Right ventricle myocardium inferior (tissue), 1 donor: ENCODE measurements at regions of chr9 and their contacts with region 1.

Region 1: GRCh38 chr9:4740638-4741364 is at the start of gene AK3:
- DNase-seq: peak; percentile 94
- ATAC-seq: peak; percentile 97
- total RNA-seq, gene AK3: 198 TPM

Region 2: GRCh38 chr9:3467593-3468219 is 1273.1 kb before region 1 on chr9:
- intact Hi-C with region 1: no loop called
- DNase-seq: peak; percentile 73
- ATAC-seq: peak; percentile 92

Region 3: DNA sequence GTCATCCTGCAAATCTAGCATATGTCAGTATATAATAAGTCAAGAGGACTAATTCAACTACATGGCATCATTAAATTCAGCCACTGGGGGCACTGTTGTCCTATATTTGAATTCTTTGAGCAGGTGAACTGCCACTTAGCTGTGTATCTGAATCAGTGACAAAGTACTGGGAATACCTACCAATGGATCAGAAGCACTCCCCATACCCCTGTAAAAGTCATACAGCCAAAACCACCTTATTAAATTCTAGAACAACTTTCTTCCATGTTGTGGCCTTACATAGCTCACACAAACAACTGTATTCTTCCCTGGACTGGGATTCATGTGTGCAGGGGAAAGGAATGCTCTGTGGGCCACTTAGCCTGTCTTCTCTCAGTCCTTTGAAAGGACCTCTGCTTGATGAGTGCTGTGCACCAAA is 136.1 kb before region 1 on chr9:
- intact Hi-C with region 1: loop called (anchors 5 kb)
- DNase-seq: no peak
- ATAC-seq: peak; percentile 64

Region 4: GRCh38 chr9:4662108-4662988 is 78.5 kb before region 1 on chr9 and contains the start of gene PLPP6:
- intact Hi-C with region 1: loop called (anchors 2 kb)
- DNase-seq: peak; percentile 93
- ATAC-seq: peak; percentile 97
- total RNA-seq, gene PLPP6: 2.3 TPM

Region 5: GRCh38 chr9:4679268-4680172 is 61.3 kb before region 1 on chr9 and contains the start of gene CDC37L1:
- intact Hi-C with region 1: loop called (anchors 5 kb)
- DNase-seq: peak; percentile 99
- ATAC-seq: peak; percentile 99
- total RNA-seq, gene CDC37L1: 42.1 TPM

Region 6: DNA sequence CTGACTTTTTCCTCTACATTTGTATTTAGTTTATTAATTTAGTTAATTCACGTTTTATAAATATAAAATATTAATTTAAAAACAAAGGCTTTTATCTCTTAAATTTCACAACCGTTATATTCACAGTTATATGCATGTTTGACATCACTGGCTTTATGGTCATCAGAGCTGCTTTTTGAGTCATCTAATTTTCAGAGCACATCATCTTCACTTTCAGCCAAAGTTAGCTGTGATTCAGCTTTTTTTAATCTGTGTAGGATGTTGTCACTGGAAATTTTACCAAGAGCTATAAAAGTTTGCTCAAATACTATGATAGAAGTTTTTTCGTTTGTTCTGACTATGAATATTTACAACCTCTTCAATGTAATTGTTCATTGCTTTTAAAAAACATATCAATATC is 49.0 kb before region 1 on chr9:
- intact Hi-C with region 1: no loop called
- DNase-seq: no peak
- ATAC-seq: no peak

Region 7: DNA sequence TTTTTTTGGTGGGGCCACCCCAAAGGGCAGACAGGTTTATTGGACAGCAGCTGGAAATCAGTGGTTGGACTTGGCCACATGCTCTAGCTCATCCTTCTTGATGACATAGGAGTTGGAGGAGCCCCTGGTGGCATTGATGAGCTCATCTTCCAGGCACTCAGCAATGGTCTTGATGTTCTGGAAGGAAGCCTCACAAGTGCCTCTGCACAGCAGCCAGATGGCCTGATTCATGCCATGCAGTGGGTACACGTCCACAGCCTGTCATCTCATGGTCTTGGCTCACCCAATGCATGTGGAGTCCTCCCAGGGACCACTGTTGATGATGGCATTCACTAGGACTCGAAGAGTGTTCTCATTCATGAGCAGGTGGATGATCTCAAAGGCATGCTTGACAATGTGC is 40.6 kb after region 1 on chr9:
- intact Hi-C with region 1: no loop called
- DNase-seq: no peak
- ATAC-seq: no peak

Region 8: GRCh38 chr9:5450359-5451091 is 709.7 kb after region 1 on chr9 and contains the start of gene CD274:
- intact Hi-C with region 1: loop called (anchors 10 kb)
- DNase-seq: peak; percentile 94
- ATAC-seq: peak; percentile 99
- total RNA-seq, gene CD274: 12.0 TPM